Activated T-helper 2 cell treated with anti-CD3 and anti-CD28 coated beads, Interferon-gamma antibody, Interleukin-2, Interleukin-4, amounts not matched to agents 10 μg/mL and 5 μg/mL and 100 μg/mL, durations not matched to agents 14 hours and 24 hours and 36 hours (primary cell): ENCODE measurements at regions of chr4 and their contacts with region 1.

Region 1: GRCh38 chr4:57163530-57164459 is 53.6 kb upstream of the IGFBP7 start:
- DNase-seq: peak; percentile 63
- H3K4me3 Mint-ChIP-seq: peak overlapping the region; percentile 85
- H3K27ac Mint-ChIP-seq: no peak overlapping the region
- H3K4me1 Mint-ChIP-seq: peaks cover 9% of the 10 kb centered on the region
- H3K27me3 Mint-ChIP-seq: peaks cover 19% of the 10 kb centered on the region

Region 2: GRCh38 chr4:57110640-57111511 is 52.9 kb before region 1 on chr4:
- intact Hi-C with region 1: loop called (anchors 2 kb)
- DNase-seq: no peak
- H3K4me3 Mint-ChIP-seq: peak overlapping the region; percentile 79
- H3K27ac Mint-ChIP-seq: no peak overlapping the region
- H3K4me1 Mint-ChIP-seq: peaks cover 10% of the 10 kb centered on the region
- H3K27me3 Mint-ChIP-seq: peaks cover 65% of the 10 kb centered on the region